Common myeloid progenitor, CD34-positive (primary cell): ENCODE measurements at regions of chr5 and their contacts with region 1.

Region 1: DNA sequence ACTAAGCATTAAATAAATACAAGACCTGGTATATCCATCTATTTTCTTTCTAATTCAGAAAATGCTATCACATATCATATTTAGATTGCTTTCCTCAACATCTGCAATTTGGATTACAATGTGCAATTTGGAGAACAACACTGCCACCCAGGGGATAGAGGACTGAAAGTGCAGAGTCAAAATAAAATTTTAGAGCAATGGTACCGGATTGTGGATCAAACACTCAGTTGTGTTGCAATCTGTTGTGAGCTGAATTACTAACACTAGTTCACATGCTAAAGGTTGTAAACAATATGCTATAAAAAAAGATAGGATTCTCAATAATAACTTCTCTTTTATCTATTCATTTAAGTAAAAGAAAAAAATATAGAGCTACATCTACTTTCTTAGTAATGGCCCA is 11.9 kb upstream of the SRFBP1 start:
- DNase-seq: peak; percentile 46 to 75 (median 69)
- H3K4me3 ChIP-seq: no peak overlapping the region
- H3K27ac ChIP-seq: no peak overlapping the region
- H3K4me1 ChIP-seq: no peaks in the 10 kb centered on the region
- H3K27me3 ChIP-seq: no peaks in the 10 kb centered on the region

Region 2: GRCh38 chr5:120655828-120656435 is 1293.9 kb before region 1 on chr5:
- CTCF ChIA-PET with region 1: interaction called, 12 read pairs
- POLR2A ChIA-PET with region 1: no interaction called
- DNase-seq: peak; percentile 10 to 33 (median 29)
- H3K4me3 ChIP-seq: no peak overlapping the region
- H3K27ac ChIP-seq: no peak overlapping the region
- H3K4me1 ChIP-seq: no peaks in the 10 kb centered on the region
- H3K27me3 ChIP-seq: peaks cover 0 to 4% (median 0%) of the 10 kb centered on the region in 5 experiments

Region 3: GRCh38 chr5:120817044-120817985 is 1132.6 kb before region 1 on chr5:
- CTCF ChIA-PET with region 1: interaction called, 14 read pairs
- POLR2A ChIA-PET with region 1: no interaction called
- DNase-seq: peak; percentile 5 to 19 (median 16)
- H3K4me3 ChIP-seq: no peak overlapping the region
- H3K27ac ChIP-seq: no peak overlapping the region
- H3K4me1 ChIP-seq: no peaks in the 10 kb centered on the region
- H3K27me3 ChIP-seq: no peaks in the 10 kb centered on the region

Region 4: DNA sequence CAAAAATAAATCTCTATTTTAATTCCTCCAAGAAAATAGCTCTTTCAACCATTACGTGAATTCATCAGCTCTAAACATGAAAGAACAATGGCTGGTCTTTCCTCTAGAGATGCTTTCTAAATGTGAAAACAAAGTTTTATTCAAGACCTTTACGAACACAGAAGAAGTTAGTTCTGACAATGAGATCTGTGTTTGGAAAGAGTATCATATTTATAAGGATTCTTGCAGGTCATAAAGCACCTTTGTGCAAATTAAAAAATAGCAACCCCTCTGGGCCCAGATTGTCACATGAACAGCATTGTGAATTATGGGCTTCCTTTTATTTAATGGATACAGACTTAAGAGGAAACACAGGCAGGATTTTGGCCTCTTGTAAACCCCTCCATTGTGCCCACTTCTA is 115.8 kb before region 1 on chr5:
- CTCF ChIA-PET with region 1: no interaction called
- POLR2A ChIA-PET with region 1: no interaction called
- DNase-seq: no peak
- H3K4me3 ChIP-seq: no peak overlapping the region
- H3K27ac ChIP-seq: no peak overlapping the region
- H3K4me1 ChIP-seq: no peaks in the 10 kb centered on the region
- H3K27me3 ChIP-seq: no peaks in the 10 kb centered on the region

Region 5: DNA sequence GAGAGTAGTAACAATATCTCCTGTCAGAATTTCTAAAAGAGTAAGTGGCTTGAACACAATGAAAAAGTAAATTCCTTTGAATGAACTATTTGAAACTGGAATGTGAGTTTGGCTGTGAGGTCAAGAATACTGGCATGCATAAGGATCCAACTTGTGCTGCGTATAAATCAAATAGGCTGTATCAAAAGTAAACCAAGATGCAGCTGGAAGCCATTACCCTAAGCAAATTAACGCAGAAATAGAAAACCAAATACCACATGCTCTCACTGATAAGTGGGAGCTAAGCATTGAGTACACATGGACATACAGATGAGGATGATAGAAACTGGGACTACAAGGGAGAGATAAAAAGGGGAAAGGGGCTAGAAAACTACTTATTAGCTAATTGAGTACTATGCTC is 12.1 kb before region 1 on chr5:
- CTCF ChIA-PET with region 1: no interaction called
- POLR2A ChIA-PET with region 1: no interaction called
- DNase-seq: no peak
- H3K4me3 ChIP-seq: no peak overlapping the region
- H3K27ac ChIP-seq: no peak overlapping the region
- H3K4me1 ChIP-seq: no peaks in the 10 kb centered on the region
- H3K27me3 ChIP-seq: no peaks in the 10 kb centered on the region

Region 6: DNA sequence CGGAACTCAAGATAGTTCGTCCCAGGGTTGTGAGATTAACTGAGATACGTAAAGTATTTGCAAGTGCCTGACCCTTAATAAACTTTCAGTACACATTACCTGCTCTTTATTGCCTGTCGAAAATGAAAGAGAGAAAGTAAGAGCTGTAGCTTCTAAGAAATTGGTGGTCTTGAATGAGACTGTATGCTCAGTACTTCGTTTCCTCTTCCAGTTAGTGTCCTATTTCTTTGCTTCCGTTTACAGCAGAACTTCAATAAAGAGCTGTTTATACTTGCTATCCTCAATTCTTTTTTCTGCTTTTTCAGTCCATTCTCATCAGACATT is 12.4 kb after region 1 on chr5:
- CTCF ChIA-PET with region 1: interaction called, 38 read pairs
- POLR2A ChIA-PET with region 1: no interaction called
- DNase-seq: peak in 1 of 3 donors; percentile 6
- H3K4me3 ChIP-seq: peak overlapping the region in 6 of 7 experiments; percentile 74 to 95 (median 90)
- H3K27ac ChIP-seq: peak overlapping the region; percentile 79 to 90
- H3K4me1 ChIP-seq: peaks cover 2 to 23% (median 13%) of the 10 kb centered on the region in 4 experiments
- H3K27me3 ChIP-seq: no peaks in the 10 kb centered on the region

Region 7: GRCh38 chr5:122085041-122085440 is 135.2 kb after region 1 on chr5:
- CTCF ChIA-PET with region 1: no interaction called
- POLR2A ChIA-PET with region 1: no interaction called
- DNase-seq: no peak
- H3K4me3 ChIP-seq: no peak overlapping the region
- H3K27ac ChIP-seq: no peak overlapping the region
- H3K4me1 ChIP-seq: peaks cover 0 to 10% (median 0%) of the 10 kb centered on the region in 4 experiments
- H3K27me3 ChIP-seq: peaks cover 0 to 2% (median 0%) of the 10 kb centered on the region in 5 experiments